Pancreas (tissue), 10 donors: ENCODE measurements at regions of chr3 and their contacts with region 1.

Region 1: DNA sequence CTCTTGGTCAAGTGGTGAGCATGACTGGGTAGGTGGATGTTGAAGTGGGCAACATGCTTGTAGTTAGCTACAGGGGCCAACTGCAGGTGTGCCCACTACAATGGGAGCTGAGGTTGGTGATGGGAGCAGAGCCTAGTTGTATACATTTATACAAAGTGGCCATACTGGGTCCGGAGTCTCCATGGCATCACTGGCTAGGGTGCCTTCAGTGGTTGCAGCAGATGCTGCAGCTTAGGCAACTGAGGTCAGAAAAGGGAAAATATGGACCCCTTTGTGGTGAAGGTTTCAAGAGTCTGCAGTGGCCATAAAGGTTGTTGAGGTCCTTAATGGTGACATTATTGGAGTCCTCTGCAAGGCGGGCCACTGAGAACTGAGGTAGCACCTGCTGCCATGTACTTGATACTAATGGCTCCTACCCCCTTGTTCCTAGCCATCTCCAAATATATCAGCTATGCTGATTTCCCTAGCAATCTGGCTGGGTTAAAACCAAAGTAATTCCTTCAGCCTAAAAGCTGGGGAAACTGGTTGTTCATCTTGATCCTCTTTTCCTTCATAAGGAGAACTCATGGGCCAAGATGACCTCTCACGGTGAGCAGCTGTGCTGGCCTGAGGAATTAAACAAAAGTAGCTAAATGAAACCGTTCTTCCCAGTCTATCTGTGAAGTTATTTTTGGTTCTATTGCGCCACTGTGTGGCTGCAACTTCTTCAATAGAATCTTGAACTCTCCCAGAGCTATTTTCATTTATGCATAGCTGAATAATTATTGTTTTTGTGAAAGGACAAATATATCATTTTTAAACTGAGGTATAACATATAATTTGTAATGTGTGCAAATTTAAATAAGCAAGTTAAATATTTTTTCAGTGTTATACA is 76.0 kb upstream of the PLSCR4 start:
- DNase-seq: peak in 3 of 6 donors; percentile 22 to 45 (median 22)
- ATAC-seq: peak; percentile 86 to 97 (median 96)
- H3K4me3 ChIP-seq: no peak overlapping the region
- H3K27ac ChIP-seq: no peak overlapping the region
- H3K4me1 ChIP-seq: no peaks in the 10 kb centered on the region
- H3K27me3 ChIP-seq: no peaks in the 10 kb centered on the region
- CTCF ChIP-seq: peak in 3 of 4 donors; percentile 36 to 45 (median 44)

Region 2: GRCh38 chr3:146065573-146066006 is 261.3 kb before region 1 on chr3:
- intact Hi-C with region 1: no loop called
- DNase-seq: peak in 2 of 6 donors; percentile 6 to 18
- ATAC-seq: peak; percentile 38 to 58 (median 46)
- H3K4me3 ChIP-seq: no peak overlapping the region
- H3K27ac ChIP-seq: no peak overlapping the region
- H3K4me1 ChIP-seq: peaks cover 0 to 5% (median 0%) of the 10 kb centered on the region in 3 donors
- H3K27me3 ChIP-seq: no peaks in the 10 kb centered on the region
- CTCF ChIP-seq: peak; percentile 22 to 80 (median 72)

Region 3: GRCh38 chr3:146117406-146118285 is 209.3 kb before region 1 on chr3:
- intact Hi-C with region 1: no loop called
- DNase-seq: no peak
- ATAC-seq: peak in 1 of 4 donors; percentile 44
- H3K4me3 ChIP-seq: no peak overlapping the region
- H3K27ac ChIP-seq: no peak overlapping the region
- H3K4me1 ChIP-seq: no peaks in the 10 kb centered on the region
- H3K27me3 ChIP-seq: no peaks in the 10 kb centered on the region
- CTCF ChIP-seq: no peak

Region 4: GRCh38 chr3:146200461-146201220 is 126.3 kb before region 1 on chr3:
- intact Hi-C with region 1: loop called in 1 of 3 experiments (anchors 10 kb)
- DNase-seq: no peak
- ATAC-seq: no peak
- H3K4me3 ChIP-seq: no peak overlapping the region
- H3K27ac ChIP-seq: no peak overlapping the region
- H3K4me1 ChIP-seq: no peaks in the 10 kb centered on the region
- H3K27me3 ChIP-seq: no peaks in the 10 kb centered on the region
- CTCF ChIP-seq: no peak

Region 5: DNA sequence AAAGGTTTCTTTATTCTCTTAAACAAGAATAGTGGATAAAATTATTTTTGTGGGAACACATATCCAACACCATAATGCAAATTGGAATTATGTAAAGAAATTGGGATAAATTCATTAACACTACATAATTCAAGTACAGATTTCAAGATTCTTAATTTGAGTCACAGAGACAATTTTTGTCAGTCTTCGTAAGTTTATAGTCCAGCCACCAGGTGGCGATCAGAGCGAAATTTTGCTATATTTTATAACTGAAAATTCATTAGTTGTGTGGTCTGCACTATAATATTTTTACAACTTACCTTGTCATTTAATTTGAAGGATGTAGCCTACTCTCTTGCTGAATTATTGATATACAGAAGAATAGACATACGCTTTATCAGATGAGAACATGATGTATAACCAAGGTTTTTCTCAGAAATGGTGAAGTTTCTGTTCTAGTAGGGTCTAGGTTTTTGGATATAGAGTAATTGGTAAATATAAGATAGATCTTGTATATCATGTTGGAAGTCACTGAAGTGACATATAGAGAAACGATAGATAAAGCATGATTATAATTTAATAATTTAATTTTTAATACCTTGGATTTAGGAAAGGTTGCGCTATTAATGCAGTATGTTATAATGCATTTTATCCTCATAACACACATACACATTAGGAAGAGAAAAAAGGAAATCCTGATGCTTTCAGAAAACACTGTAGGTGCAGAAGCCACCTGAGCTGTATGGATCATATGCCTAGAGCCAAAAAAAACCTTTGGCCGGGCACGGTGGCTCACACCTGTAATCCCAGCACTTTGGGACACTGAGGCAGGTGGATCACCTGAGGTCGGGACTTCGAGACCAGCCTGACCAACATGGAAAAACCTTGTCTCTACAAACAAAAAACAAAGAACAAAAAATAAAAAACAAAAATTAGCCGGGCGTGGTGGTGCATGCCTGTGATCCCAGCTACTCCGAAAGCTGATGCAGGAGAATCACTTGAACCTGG is 107.7 kb before region 1 on chr3:
- intact Hi-C with region 1: loop called in 2 of 3 experiments (anchors 5 to 10 kb)
- DNase-seq: peak in 3 of 6 donors; percentile 27 to 64 (median 45)
- ATAC-seq: no peak
- H3K4me3 ChIP-seq: no peak overlapping the region
- H3K27ac ChIP-seq: no peak overlapping the region
- H3K4me1 ChIP-seq: peaks cover 17 to 29% (median 25%) of the 10 kb centered on the region in 3 donors
- H3K27me3 ChIP-seq: no peaks in the 10 kb centered on the region
- CTCF ChIP-seq: peak; percentile 44 to 68 (median 52)